HEK293T (cell line): ENCODE measurements at regions of chr11 and their contacts with region 1.

Region 1: GRCh38 chr11:819129-819931 is 616 bp downstream of the PNPLA2 start:
- DNase-seq: peak; percentile 89

Region 2: GRCh38 chr11:798093-798713 is 21.1 kb before region 1 on chr11 and contains the start of gene SLC25A22:
- CTCF ChIA-PET with region 1: no interaction called
- POLR2A ChIA-PET with region 1: interaction called, 15 read pairs
- DNase-seq: peak; percentile 91

Region 3: GRCh38 chr11:832321-833113 is 13.2 kb after region 1 on chr11 and contains the start of gene CD151:
- CTCF ChIA-PET with region 1: no interaction called
- POLR2A ChIA-PET with region 1: interaction called, 40 read pairs
- DNase-seq: peak; percentile 64

Region 4: GRCh38 chr11:925496-926321 is 106.4 kb after region 1 on chr11 and contains the start of gene AP2A2:
- CTCF ChIA-PET with region 1: no interaction called
- POLR2A ChIA-PET with region 1: no interaction called
- DNase-seq: peak; percentile 97